Left lung (tissue), 14 donors: ENCODE measurements at regions of chr2 and their contacts with region 1.

Region 1: GRCh38 chr2:134402410-134402809 is 148.5 kb downstream of the MGAT5 start:
- DNase-seq: peak in 1 of 4 donors; percentile 19
- ATAC-seq: peak; percentile 37
- H3K4me3 ChIP-seq: no peak overlapping the region
- H3K27ac ChIP-seq: peak overlapping the region in 1 of 2 donors; percentile 35
- H3K4me1 ChIP-seq: peaks cover 0 to 11% of the 10 kb centered on the region in 2 donors
- H3K27me3 ChIP-seq: no peaks in the 10 kb centered on the region
- CTCF ChIP-seq: no peak

Region 2: GRCh38 chr2:134258684-134259388 is 143.6 kb before region 1 on chr2:
- intact Hi-C with region 1: loop called in 1 of 2 experiments (anchors 10 kb)
- DNase-seq: no peak
- ATAC-seq: no peak
- H3K4me3 ChIP-seq: no peak overlapping the region
- H3K27ac ChIP-seq: no peak overlapping the region
- H3K4me1 ChIP-seq: peaks cover 22 to 45% of the 10 kb centered on the region in 2 donors
- H3K27me3 ChIP-seq: no peaks in the 10 kb centered on the region
- CTCF ChIP-seq: no peak

Region 3: DNA sequence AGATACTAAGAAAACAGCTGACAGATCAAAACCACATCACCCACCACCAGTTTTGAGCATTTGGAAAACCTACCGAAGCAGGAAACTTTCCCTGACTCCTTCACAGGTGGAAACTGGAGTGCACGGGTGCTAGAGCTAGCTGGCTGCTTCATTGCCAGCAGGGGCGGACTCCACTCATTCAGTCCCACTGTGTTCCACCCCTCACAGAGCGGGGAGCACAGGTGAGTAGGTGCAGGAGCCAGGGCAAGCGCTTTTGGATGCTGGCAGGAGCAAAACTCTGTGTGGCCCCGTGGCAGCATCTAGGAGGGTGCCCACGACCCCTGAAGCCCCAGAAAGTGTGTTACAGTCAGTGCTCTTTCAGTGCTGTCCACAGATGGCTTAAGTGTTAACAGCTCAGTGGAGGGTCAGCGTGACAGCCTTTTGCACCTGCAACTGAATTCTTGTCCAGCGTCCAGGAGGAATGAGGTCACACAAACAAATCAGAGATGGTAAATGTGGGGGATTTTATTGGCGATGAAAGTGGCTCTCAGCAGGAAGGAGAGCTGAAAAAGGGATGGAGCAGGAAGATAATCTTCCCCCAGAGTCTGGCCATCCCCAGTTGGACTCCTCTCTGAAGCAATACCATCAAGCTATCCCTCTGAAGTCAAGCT is 245.3 kb after region 1 on chr2:
- intact Hi-C with region 1: no loop called
- DNase-seq: peak in 1 of 4 donors; percentile 44
- ATAC-seq: peak; percentile 31
- H3K4me3 ChIP-seq: no peak overlapping the region
- H3K27ac ChIP-seq: no peak overlapping the region
- H3K4me1 ChIP-seq: no peaks in the 10 kb centered on the region
- H3K27me3 ChIP-seq: no peaks in the 10 kb centered on the region
- CTCF ChIP-seq: no peak